ENCODE measurements at regions of chr10 and their contacts with region 1.

Region 1: DNA sequence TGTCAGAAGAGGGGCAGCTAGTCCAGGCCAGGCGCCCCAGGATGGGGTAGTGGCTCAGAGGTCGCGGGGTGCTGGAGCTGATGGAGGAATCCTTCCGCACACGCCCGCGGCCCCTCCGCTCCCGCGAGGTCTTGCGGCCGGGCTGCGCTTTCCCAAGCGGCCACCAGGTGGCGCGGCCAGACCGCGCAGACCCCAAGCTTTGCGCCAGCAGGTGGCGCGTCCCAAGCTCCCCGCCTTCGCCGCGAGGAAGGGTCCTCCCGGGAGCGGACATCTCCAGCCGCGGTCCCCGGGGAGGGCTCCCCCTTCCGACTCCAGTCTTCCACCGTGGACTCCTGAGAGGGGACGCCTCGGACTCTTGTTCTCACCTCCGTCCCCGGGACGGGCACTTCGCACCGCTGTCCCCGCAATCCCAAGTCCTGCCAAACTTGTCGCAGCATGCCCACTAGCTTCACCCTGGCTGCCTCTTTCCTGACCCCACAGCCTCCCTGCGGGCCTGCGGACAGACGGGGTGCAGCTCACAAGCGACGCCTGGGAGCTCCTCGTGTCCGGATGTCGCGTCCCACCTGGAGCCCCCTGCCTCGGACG is 19.4 kb downstream of the KCNK18 start:
- DNase-seq: peak; percentile 37 to 86 (median 60)
- ATAC-seq: peak; percentile 87
- H3K4me3 ChIP-seq: peak overlapping the region; percentile 67
- H3K4me3 Mint-ChIP-seq: peak overlapping the region; percentile 75
- H3K27ac ChIP-seq: no peak overlapping the region
- H3K27ac Mint-ChIP-seq: no peak overlapping the region
- H3K4me1 ChIP-seq: peaks cover 15% of the 10 kb centered on the region
- H3K4me1 Mint-ChIP-seq: no peaks in the 10 kb centered on the region
- H3K27me3 ChIP-seq: peaks cover 18 to 23% of the 10 kb centered on the region in 2 experiments
- H3K27me3 Mint-ChIP-seq: peaks cover 57% of the 10 kb centered on the region
- CTCF ChIP-seq: peak; percentile 100

Region 2: DNA sequence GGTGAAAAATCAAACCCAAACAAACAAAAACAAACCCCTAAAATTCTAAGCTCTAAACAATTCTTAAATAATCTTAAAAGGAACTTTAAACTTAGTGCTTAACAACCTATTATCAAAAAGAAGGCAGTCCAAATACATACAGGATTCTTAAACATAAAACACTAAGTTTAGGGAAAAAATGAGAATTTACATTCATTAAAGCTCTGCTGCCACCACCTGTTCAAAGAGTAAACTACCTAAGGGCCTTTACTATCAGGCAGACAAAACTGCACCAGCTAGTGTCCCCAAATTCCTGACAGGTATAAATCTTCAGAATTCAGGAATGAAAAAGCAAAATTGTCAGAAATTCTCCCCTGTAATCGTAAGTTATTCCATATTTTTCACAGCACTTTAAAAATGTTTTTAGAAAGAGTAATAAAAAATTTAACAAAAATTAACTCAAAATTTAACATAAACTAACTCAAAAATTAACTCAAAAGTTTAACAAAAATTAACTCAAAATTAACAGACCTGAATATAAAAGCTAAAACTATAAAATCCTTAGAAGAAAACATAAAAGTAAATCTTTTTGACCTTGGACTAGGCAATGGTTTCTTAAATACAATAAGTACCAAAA is 103.5 kb after region 1 on chr10:
- CTCF ChIA-PET with region 1: interaction called, 17 read pairs
- POLR2A ChIA-PET with region 1: interaction called, 12 read pairs
- intact Hi-C with region 1: loop called (anchors 1 kb)
- DNase-seq: peak in 3 of 14 experiments; percentile 21 to 45 (median 33)
- ATAC-seq: peak; percentile 41
- H3K4me3 ChIP-seq: no peak overlapping the region
- H3K4me3 Mint-ChIP-seq: no peak overlapping the region
- H3K27ac ChIP-seq: no peak overlapping the region
- H3K27ac Mint-ChIP-seq: no peak overlapping the region
- H3K4me1 ChIP-seq: no peaks in the 10 kb centered on the region
- H3K4me1 Mint-ChIP-seq: peaks cover 5% of the 10 kb centered on the region
- H3K27me3 ChIP-seq: no peaks in the 10 kb centered on the region
- H3K27me3 Mint-ChIP-seq: no peaks in the 10 kb centered on the region
- CTCF ChIP-seq: peak; percentile 71

Region 3: GRCh38 chr10:117425974-117426566 is 209.4 kb after region 1 on chr10:
- CTCF ChIA-PET with region 1: interaction called, 4 read pairs
- POLR2A ChIA-PET with region 1: no interaction called
- intact Hi-C with region 1: loop called in 1 of 2 experiments (anchors 5 kb)
- DNase-seq: no peak
- ATAC-seq: no peak
- H3K4me3 ChIP-seq: no peak overlapping the region
- H3K4me3 Mint-ChIP-seq: no peak overlapping the region
- H3K27ac ChIP-seq: no peak overlapping the region
- H3K27ac Mint-ChIP-seq: no peak overlapping the region
- H3K4me1 ChIP-seq: no peaks in the 10 kb centered on the region
- H3K4me1 Mint-ChIP-seq: no peaks in the 10 kb centered on the region
- H3K27me3 ChIP-seq: no peaks in the 10 kb centered on the region
- H3K27me3 Mint-ChIP-seq: no peaks in the 10 kb centered on the region
- CTCF ChIP-seq: no peak

Measured in CD4-positive, alpha-beta T cell (primary cell).